HCT116 (cell line): ENCODE measurements at regions of chr10 and their contacts with region 1.

Region 1: GRCh38 chr10:132536971-132537712 is 445 bp upstream of the INPP5A start:
- DNase-seq: peak; percentile 85
- ATAC-seq: peak; percentile 85
- H3K4me3 ChIP-seq: peak overlapping the region; percentile 45 to 61
- H3K27ac ChIP-seq: peak overlapping the region; percentile 72; the same call in 1 of the 2 replicates
- H3K4me1 ChIP-seq: peaks cover 16 to 39% of the 10 kb centered on the region in 2 experiments
- H3K27me3 ChIP-seq: no peaks in the 10 kb centered on the region
- CTCF ChIP-seq: no peak
- POLR2A ChIP-seq: peak; percentile 27
- RAD21 ChIP-seq: peak; percentile 14; the same call in 1 of the 2 replicates

Region 2: DNA sequence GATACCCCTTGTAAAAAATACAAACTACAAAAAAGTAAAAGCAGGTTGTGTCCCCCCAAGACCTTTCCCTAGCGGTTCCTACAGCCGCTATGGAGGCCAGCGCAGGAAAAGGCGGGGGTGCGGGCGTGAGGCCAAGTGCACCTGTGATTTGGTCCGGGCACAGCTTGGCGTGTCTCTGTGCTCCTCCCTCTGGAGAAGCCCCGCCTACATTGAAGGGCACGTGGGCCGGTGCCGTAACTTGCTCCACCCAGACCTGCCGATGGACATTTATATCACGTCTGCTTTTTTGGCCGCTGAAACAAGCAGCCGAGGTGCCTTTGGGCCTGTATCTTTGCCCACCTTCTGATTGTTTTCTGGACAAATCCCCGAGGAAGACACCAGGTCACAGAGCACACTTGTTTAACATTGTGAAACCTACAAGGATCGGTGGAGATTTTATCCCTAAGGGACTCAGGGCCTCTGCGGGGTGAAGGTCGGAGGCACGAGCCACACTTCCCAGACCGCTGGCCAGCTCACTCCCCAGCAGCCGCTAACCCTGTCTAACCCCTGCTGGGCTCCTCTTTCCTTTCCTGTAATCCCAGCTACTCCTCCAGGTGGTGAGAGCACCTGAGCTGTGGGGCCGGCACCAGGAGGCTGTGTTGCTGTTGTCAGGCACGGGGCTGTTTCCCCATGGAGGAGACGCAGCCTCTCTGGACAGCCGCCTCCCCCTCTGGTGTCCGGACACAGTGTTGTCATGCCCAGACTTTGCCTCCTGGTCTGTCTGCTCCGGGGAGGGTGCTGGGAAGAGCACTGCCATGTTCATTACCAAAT is 18.4 kb before region 1 on chr10:
- CTCF ChIA-PET with region 1: no interaction called
- POLR2A ChIA-PET with region 1: no interaction called
- RAD21 ChIA-PET with region 1: no interaction called
- intact Hi-C with region 1: loop called (anchors 2 kb)
- DNase-seq: peak; percentile 51
- ATAC-seq: peak; percentile 79
- H3K4me3 ChIP-seq: peak overlapping the region; percentile 33 to 53
- H3K27ac ChIP-seq: peak overlapping the region; percentile 95
- H3K4me1 ChIP-seq: peaks cover 30 to 41% of the 10 kb centered on the region in 2 experiments
- H3K27me3 ChIP-seq: no peaks in the 10 kb centered on the region
- CTCF ChIP-seq: no peak
- POLR2A ChIP-seq: no peak
- RAD21 ChIP-seq: no peak

Region 3: DNA sequence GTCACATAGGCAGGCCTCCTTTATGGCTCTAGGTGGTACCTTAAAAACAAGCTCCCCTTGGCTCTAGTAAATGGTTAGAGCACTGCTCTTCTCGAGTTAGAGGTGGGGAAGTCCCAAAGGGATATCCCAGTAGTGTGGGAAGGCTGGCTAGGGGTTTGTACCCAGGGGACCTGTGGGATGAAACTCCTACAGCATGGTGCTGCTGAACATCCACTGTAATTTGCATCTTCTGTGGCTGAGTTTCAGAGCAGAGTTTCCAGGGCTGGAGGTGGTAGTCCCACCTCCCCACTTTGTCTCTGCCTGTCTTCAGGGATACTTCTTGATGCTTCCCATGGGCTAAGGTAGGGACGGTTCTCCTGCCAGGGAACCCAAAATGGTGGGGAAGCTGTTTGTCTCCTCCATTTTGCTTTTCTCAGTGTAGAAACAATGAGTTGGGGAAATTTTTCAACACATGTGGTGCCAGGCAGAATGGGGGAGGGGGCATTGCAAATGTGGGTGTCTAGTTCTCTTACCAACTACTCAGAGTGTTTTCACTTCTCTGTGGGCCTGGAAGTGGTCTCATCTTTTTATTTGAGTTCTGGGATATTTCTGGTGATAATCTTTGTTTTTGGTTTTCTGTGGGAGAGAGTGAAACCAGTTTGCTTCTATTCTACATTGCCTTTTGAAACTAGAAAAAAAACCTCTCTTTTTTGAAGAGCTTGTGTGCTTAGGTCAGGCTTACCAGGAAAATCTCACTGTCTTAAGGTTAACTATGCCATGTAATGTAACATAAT is 952.9 kb after region 1 on chr10:
- CTCF ChIA-PET with region 1: no interaction called
- POLR2A ChIA-PET with region 1: no interaction called
- RAD21 ChIA-PET with region 1: no interaction called
- intact Hi-C with region 1: no loop called
- DNase-seq: no peak
- ATAC-seq: no peak
- H3K4me3 ChIP-seq: no peak overlapping the region
- H3K27ac ChIP-seq: no peak overlapping the region
- H3K4me1 ChIP-seq: no peaks in the 10 kb centered on the region
- H3K27me3 ChIP-seq: no peaks in the 10 kb centered on the region
- CTCF ChIP-seq: no peak
- POLR2A ChIP-seq: no peak
- RAD21 ChIP-seq: no peak